ENCODE measurements at regions of chr5 and their contacts with region 1.

Region 1: GRCh38 chr5:78920604-78921003 is 64.5 kb downstream of the ARSB start:
- DNase-seq: no peak
- H3K4me3 ChIP-seq: no peak overlapping the region
- H3K27me3 ChIP-seq: no peaks in the 10 kb centered on the region
- CTCF ChIP-seq: peak; percentile 56

Region 2: GRCh38 chr5:78899922-78900362 is 20.7 kb before region 1 on chr5:
- CTCF ChIA-PET with region 1: interaction called, 10 read pairs
- POLR2A ChIA-PET with region 1: no interaction called
- DNase-seq: no peak
- H3K4me3 ChIP-seq: no peak overlapping the region
- H3K27me3 ChIP-seq: no peaks in the 10 kb centered on the region
- CTCF ChIP-seq: peak; percentile 81

Region 3: DNA sequence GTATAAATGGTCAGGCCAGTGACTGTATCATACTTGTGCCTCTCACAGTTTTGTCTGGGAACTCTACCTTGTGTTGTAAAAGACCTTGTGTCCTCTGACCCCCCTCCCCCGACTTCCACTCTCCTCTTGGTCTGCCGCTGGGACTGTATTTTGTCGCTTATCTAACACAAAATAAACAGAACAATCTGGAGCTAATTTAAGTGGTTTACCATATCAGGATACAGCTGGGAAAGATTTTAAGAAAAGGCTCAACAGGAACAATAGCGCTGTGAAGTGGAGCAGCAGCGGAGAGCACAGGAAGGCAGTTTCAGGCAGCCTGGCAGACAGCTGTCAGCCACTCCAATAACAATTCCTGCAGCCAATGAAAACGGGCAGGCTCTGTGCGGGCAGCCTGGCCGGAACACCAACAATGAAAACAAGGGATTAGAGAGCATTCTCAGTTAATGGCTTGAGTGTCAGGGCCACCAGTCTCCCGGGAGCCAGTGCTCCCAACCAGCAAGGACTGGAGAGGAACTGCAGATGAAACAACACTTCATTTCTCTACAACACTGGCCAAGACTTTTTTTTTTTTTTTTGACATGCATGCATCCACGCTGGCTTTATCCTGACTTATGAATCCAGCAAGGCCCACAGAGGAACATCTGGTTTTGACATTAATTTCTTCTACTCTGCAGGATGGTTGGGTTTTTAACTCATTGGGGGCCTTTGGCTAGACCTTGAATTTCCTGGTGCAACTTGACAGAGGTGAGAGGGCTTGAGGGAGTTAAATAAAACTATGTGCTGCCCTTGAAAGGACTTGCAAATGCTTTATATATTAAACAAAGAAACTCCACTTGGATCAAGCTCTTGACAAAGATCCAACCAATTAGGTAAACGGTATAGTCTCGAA is 12.2 kb before region 1 on chr5:
- CTCF ChIA-PET with region 1: interaction called, 16 read pairs
- POLR2A ChIA-PET with region 1: no interaction called
- DNase-seq: peak; percentile 33
- H3K4me3 ChIP-seq: peak overlapping the region; percentile 0
- H3K27me3 ChIP-seq: no peaks in the 10 kb centered on the region
- CTCF ChIP-seq: no peak